MCF 10A (cell line): ENCODE measurements at regions of chr1 and their contacts with region 1.

Region 1: DNA sequence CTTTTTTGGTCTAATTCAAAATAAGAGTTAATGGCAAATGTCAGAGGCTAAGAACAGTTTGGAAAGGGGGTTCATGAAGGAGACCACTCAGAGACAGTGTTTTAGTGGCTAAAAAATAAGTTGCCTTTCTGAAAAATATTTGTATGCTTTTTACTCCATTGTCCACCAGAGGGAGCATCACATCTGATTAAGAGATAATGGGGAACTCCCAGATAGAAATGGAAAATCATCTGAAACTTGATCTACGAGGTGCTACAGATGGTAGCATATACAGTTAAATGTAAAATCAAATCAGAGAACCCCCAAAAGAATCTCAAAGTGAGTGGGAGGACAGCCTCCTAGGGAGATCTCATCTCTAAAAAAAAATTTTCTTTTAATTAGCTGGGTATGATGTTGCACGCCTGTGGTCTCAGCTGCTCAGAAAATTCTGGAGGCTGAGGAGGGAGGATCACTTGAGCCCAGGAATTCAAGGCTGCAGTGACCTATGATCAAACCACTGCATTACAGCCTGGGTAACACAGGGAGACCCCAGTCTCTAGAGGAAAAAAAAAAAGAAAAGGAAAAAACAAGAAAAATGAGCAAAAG is 9.7 kb downstream of the SMYD3 start:
- DNase-seq: peak; percentile 91
- H3K4me3 Mint-ChIP-seq: no peak overlapping the region
- H3K27ac Mint-ChIP-seq: no peak overlapping the region
- H3K4me1 Mint-ChIP-seq: peaks cover 7% of the 10 kb centered on the region
- H3K27me3 Mint-ChIP-seq: no peaks in the 10 kb centered on the region
- CTCF ChIP-seq: peak; percentile 86

Region 2: DNA sequence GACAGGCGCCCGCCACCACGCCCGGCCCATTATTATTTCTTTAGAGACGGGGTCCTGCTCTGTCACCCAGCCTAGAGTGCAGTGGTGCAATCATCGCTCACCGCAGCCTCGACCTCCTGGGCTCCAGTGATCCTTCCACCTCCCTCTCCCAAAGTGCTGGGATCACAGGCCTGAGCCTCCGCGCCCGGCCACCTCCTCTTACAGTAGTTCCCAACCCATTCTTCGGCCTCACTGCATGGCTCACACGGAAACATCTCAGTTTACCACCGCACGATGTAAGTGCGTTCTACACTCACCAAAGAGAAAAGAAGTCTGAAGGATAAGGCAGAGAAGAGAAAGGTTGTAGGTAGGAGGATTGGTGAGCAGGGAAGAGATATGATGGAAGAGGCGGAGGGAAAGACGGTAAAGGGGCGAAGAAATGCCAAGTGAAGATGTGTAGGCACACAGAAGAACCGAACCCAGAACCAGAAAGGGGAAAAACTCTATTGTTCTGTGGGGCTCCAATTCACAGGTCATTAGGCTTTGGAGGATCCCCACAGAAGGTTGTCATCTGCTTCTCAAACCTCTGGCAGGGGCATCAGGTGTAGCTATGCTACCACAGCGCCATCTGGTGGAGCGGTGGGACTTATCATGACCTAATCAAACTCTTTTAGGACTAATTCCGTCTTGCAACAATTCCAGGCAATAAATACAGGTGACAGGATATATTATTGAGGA is 494.5 kb before region 1 on chr1:
- CTCF ChIA-PET with region 1: interaction called, 4 read pairs
- POLR2A ChIA-PET with region 1: no interaction called
- intact Hi-C with region 1: loop called (anchors 2 kb)
- DNase-seq: peak; percentile 96
- H3K4me3 Mint-ChIP-seq: no peak overlapping the region
- H3K27ac Mint-ChIP-seq: no peak overlapping the region
- H3K4me1 Mint-ChIP-seq: peaks cover 53% of the 10 kb centered on the region
- H3K27me3 Mint-ChIP-seq: no peaks in the 10 kb centered on the region
- CTCF ChIP-seq: peak; percentile 99

Region 3: DNA sequence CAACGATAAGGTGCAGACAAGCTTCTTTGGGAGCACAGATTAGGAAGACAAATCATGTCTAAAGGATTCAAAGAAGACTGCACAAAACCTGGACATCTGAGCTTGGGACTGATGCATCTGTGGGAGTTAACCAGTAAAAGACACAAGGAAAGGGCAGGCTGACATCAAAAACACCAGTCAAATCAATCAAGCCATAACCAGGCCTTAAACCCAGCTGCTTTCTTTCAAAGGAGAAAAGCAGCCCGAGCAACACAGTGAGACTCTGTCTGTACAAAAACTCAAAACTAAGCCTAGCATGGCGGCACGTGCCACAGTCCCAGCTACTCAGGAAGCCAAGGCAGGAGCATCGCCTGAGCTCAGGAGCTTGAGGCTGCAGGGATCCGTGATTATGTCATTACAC is 402.0 kb before region 1 on chr1:
- CTCF ChIA-PET with region 1: no interaction called
- POLR2A ChIA-PET with region 1: no interaction called
- intact Hi-C with region 1: no loop called
- DNase-seq: no peak
- H3K4me3 Mint-ChIP-seq: no peak overlapping the region
- H3K27ac Mint-ChIP-seq: no peak overlapping the region
- H3K4me1 Mint-ChIP-seq: no peaks in the 10 kb centered on the region
- H3K27me3 Mint-ChIP-seq: no peaks in the 10 kb centered on the region
- CTCF ChIP-seq: no peak

Region 4: DNA sequence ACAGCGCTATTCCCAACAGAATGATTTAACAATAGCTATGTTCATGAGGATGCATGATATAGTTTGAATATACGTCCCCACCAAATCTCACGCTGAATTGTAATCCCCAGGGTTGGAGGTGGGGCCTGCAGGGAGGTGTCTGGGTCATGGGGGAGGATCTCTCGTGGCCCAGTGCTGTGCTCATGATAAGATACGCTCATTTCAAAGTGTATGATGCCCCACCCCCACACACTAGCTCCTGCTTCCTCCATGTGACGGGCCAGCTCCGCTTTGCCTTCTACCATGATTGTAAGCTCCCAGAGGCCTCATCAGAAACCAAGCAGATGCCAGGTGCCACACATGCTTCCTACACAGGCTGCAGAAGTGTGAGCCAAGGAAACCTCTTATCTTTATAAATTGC is 84.0 kb before region 1 on chr1:
- CTCF ChIA-PET with region 1: interaction called, 12 read pairs
- POLR2A ChIA-PET with region 1: no interaction called
- intact Hi-C with region 1: no loop called
- DNase-seq: no peak
- H3K4me3 Mint-ChIP-seq: no peak overlapping the region
- H3K27ac Mint-ChIP-seq: no peak overlapping the region
- H3K4me1 Mint-ChIP-seq: no peaks in the 10 kb centered on the region
- H3K27me3 Mint-ChIP-seq: no peaks in the 10 kb centered on the region
- CTCF ChIP-seq: no peak

Region 5: GRCh38 chr1:246476771-246477170 is 20.7 kb before region 1 on chr1:
- CTCF ChIA-PET with region 1: interaction called, 79 read pairs
- POLR2A ChIA-PET with region 1: interaction called, 5 read pairs
- intact Hi-C with region 1: no loop called
- DNase-seq: no peak
- H3K4me3 Mint-ChIP-seq: no peak overlapping the region
- H3K27ac Mint-ChIP-seq: no peak overlapping the region
- H3K4me1 Mint-ChIP-seq: peaks cover 6% of the 10 kb centered on the region
- H3K27me3 Mint-ChIP-seq: no peaks in the 10 kb centered on the region
- CTCF ChIP-seq: no peak

Region 6: GRCh38 chr1:246544001-246544400 is 46.6 kb after region 1 on chr1:
- CTCF ChIA-PET with region 1: interaction called, 10 read pairs
- POLR2A ChIA-PET with region 1: interaction called, 3 read pairs
- intact Hi-C with region 1: no loop called
- DNase-seq: no peak
- H3K4me3 Mint-ChIP-seq: no peak overlapping the region
- H3K27ac Mint-ChIP-seq: peak overlapping the region; percentile 12
- H3K4me1 Mint-ChIP-seq: no peaks in the 10 kb centered on the region
- H3K27me3 Mint-ChIP-seq: no peaks in the 10 kb centered on the region
- CTCF ChIP-seq: no peak

Region 7: DNA sequence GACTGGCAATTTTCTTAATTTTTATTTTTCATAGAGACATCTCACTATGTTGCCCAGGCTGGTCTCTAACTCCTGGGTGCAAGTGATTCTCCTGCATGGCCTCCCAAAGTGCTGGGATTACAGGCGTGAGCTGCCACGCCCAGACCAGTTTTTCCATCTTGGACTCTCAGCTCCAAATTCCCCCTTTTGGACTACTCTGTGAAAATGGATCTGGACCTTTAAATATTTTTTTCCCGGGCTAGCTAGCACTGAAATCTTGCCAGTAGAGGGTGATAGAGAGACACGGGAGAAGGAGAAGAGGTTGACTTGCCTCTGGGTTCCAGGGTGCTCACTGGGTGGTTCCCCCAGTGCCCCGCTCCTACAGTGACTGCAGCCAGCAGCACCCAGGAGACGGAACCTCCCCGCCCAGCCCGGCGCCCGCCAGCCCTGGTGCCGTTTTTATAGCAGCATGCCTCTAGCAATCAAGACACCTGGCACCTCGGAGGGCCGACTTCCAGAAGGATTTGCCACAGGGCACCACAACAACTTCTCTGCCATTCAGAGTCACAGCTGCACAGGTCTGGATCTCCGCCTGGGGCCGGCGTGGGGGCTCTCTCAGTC is 192.1 kb after region 1 on chr1:
- CTCF ChIA-PET with region 1: interaction called, 14 read pairs
- POLR2A ChIA-PET with region 1: no interaction called
- intact Hi-C with region 1: loop called (anchors 1 kb)
- DNase-seq: peak; percentile 93
- H3K4me3 Mint-ChIP-seq: peak overlapping the region; percentile 53
- H3K27ac Mint-ChIP-seq: no peak overlapping the region
- H3K4me1 Mint-ChIP-seq: no peaks in the 10 kb centered on the region
- H3K27me3 Mint-ChIP-seq: no peaks in the 10 kb centered on the region
- CTCF ChIP-seq: peak; percentile 97

Region 8: DNA sequence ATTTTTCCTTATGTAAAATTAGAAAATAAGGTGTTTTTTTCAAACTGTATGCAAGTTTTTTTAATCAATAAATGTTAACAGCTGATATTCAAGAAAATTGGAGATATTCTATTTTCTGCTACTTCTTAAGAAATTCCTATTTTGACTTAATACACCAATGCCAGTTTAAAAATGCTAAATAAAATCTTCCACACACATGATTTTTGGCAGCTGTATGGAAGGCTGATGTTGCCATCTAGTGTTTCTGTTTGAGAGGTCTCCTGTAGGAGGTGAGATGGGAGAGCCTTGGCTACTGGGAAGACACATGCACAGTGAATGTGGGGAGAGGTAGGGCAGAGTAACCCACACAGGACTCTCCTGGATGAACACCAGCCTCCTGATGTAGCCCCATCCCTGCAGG is 989.6 kb after region 1 on chr1:
- CTCF ChIA-PET with region 1: no interaction called
- POLR2A ChIA-PET with region 1: no interaction called
- intact Hi-C with region 1: loop called (anchors 5 kb)
- DNase-seq: peak; percentile 76
- H3K4me3 Mint-ChIP-seq: no peak overlapping the region
- H3K27ac Mint-ChIP-seq: no peak overlapping the region
- H3K4me1 Mint-ChIP-seq: peaks cover 11% of the 10 kb centered on the region
- H3K27me3 Mint-ChIP-seq: peaks cover 45% of the 10 kb centered on the region
- CTCF ChIP-seq: peak; percentile 84